ENCODE measurements at regions of chr19 and their contacts with region 1.

Region 1: GRCh38 chr19:47210689-47211316 is 20.2 kb downstream of the BBC3 start:
- DNase-seq: peak; percentile 71 to 90
- ATAC-seq: peak; percentile 89 to 99 (median 93)
- H3K4me3 ChIP-seq: no peak overlapping the region
- H3K4me3 Mint-ChIP-seq: peak overlapping the region; percentile 29
- H3K27ac ChIP-seq: no peak overlapping the region
- H3K27ac Mint-ChIP-seq: peak overlapping the region; percentile 75 to 83
- H3K4me1 ChIP-seq: peaks cover 9% of the 10 kb centered on the region
- H3K4me1 Mint-ChIP-seq: peaks cover 7 to 8% of the 10 kb centered on the region in 2 donors
- H3K27me3 ChIP-seq: no peaks in the 10 kb centered on the region
- H3K27me3 Mint-ChIP-seq: no peaks in the 10 kb centered on the region
- CTCF ChIP-seq: peak; percentile 89

Region 2: DNA sequence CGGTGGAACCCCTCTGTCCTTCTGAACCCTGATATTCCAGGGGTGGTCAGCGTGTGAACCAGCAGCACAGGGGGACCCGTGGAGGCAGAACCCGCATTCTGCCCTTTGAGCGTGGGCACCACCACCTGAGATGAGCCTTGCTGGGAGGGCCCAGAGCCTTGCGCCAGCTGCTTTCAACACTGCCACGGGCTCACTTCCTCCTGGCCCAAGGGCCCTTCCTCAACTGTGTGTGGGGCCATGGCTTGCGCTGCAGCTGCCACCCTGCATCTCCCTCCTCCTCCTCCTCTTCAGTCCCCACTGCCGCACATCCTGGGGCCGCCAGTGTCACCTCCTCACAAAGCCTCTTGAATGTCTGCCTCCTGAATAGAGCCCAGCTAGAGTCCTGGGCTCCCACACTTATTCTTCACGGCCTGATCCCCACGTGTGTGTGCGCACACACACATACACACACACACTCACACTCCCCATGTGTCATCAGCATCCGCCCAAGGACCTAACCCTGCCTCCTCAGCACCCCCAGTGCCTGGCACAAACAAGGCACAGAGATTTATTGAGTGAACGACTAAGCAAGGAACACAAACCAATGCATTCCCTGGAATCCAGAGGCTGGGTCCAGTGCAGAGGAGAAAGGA is 135.5 kb before region 1 on chr19:
- intact Hi-C with region 1: no loop called
- DNase-seq: no peak
- ATAC-seq: peak in 1 of 3 donors; percentile 57
- H3K4me3 ChIP-seq: no peak overlapping the region
- H3K4me3 Mint-ChIP-seq: no peak overlapping the region
- H3K27ac ChIP-seq: no peak overlapping the region
- H3K27ac Mint-ChIP-seq: peak overlapping the region in 1 of 2 donors; percentile 61
- H3K4me1 ChIP-seq: peaks cover 10% of the 10 kb centered on the region
- H3K4me1 Mint-ChIP-seq: peaks cover 12 to 16% of the 10 kb centered on the region in 2 donors
- H3K27me3 ChIP-seq: no peaks in the 10 kb centered on the region
- H3K27me3 Mint-ChIP-seq: no peaks in the 10 kb centered on the region
- CTCF ChIP-seq: no peak

Region 3: GRCh38 chr19:47152224-47153017 is 58.4 kb before region 1 on chr19:
- intact Hi-C with region 1: loop called (anchors 1 kb)
- DNase-seq: no peak
- ATAC-seq: no peak
- H3K4me3 ChIP-seq: no peak overlapping the region
- H3K4me3 Mint-ChIP-seq: no peak overlapping the region
- H3K27ac ChIP-seq: no peak overlapping the region
- H3K27ac Mint-ChIP-seq: no peak overlapping the region
- H3K4me1 ChIP-seq: peaks cover 29% of the 10 kb centered on the region
- H3K4me1 Mint-ChIP-seq: peaks cover 17 to 18% of the 10 kb centered on the region in 2 donors
- H3K27me3 ChIP-seq: no peaks in the 10 kb centered on the region
- H3K27me3 Mint-ChIP-seq: no peaks in the 10 kb centered on the region
- CTCF ChIP-seq: no peak

Region 4: DNA sequence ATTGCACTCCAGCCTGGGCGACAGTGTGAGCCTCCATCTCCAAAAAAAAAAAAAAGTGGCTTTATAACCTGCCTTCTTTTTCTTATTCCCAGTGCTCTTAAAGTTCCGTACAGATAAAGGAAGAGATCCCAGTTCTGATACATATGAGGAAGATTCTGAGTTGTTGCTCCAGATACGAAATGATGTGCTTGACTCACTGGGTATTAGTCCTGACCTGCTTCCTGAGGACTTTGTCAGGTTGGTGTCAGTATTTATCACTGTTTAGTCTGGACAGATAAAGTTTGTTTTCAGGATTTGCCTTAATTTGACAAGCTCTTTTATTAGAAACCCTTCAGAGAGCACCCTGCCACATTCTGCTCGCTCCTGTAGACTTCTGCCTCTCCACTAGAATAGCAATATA is 13.7 kb before region 1 on chr19:
- intact Hi-C with region 1: no loop called
- DNase-seq: no peak
- ATAC-seq: no peak
- H3K4me3 ChIP-seq: no peak overlapping the region
- H3K4me3 Mint-ChIP-seq: no peak overlapping the region
- H3K27ac ChIP-seq: no peak overlapping the region
- H3K27ac Mint-ChIP-seq: no peak overlapping the region
- H3K4me1 ChIP-seq: no peaks in the 10 kb centered on the region
- H3K4me1 Mint-ChIP-seq: no peaks in the 10 kb centered on the region
- H3K27me3 ChIP-seq: no peaks in the 10 kb centered on the region
- H3K27me3 Mint-ChIP-seq: no peaks in the 10 kb centered on the region
- CTCF ChIP-seq: no peak

Region 5: DNA sequence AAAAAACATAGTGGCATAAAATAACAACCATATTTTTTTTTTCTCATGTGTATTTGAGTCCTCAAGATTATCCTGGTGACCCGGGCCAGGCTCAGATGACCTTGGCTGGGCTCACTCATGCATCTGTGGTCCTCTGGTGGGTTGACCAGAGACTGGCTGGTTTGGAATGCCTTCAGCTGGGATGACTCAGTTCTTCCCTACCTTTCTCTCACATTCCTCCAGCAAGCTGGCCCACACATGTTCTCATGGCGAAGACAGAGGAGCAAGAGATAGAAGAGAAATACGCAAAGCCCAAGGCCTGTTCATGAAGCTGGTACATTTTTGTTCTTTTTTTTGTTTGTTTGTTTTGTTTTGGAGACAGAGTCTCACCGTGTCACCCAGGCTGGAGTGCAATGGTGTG is 376.5 kb after region 1 on chr19:
- intact Hi-C with region 1: no loop called
- DNase-seq: no peak
- ATAC-seq: no peak
- H3K4me3 ChIP-seq: no peak overlapping the region
- H3K4me3 Mint-ChIP-seq: no peak overlapping the region
- H3K27ac ChIP-seq: no peak overlapping the region
- H3K27ac Mint-ChIP-seq: no peak overlapping the region
- H3K4me1 ChIP-seq: no peaks in the 10 kb centered on the region
- H3K4me1 Mint-ChIP-seq: peaks cover 0 to 3% of the 10 kb centered on the region in 2 donors
- H3K27me3 ChIP-seq: peaks cover 3% of the 10 kb centered on the region
- H3K27me3 Mint-ChIP-seq: peaks cover 6 to 14% of the 10 kb centered on the region in 2 donors
- CTCF ChIP-seq: no peak

Measured in natural killer cell (primary cell).